ENCODE measurements at regions of chr11 and their contacts with region 1.

Region 1: DNA sequence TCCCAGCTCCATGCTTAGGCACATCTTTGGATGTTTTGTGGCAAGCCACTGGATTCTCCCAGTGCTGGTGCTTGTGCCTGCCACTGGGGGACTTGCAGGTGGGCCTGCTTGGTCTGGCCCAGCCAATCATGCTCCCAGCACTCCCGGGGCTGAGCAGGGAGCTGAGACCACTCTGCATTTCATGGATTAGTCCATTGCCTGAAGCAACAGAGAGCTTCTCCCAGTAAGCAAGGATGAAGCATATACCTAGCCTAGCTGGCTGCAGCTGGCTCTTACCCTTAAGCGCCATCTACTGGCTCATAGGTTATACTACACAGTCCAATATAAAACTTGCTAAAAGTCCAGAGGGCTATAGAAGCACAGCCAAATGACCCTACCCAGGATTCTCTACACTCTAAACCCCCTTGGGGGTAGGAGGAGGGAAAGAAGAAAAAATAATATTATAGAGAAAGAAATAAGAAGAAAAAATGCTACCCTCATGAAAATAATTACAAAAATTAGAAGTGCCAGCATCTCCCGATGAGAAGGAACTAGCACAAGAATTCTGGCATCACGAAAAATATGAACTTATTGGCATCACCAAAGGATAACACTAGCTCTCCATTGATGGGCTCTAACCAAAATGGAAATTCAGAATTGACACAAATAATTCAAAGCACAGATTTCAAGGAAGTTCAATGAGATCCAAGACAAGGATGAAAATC is 275.3 kb downstream of the C11orf87 start:
- DNase-seq: peak; percentile 15
- H3K4me3 ChIP-seq: no peak overlapping the region
- H3K27ac ChIP-seq: no peak overlapping the region
- H3K27me3 ChIP-seq: no peaks in the 10 kb centered on the region
- CTCF ChIP-seq: peak; percentile 75

Region 2: GRCh38 chr11:108664730-108665525 is 1032.4 kb before region 1 on chr11 and contains the start of gene DDX10:
- CTCF ChIA-PET with region 1: interaction called, 12 read pairs
- POLR2A ChIA-PET with region 1: no interaction called
- DNase-seq: peak; percentile 97
- H3K4me3 ChIP-seq: peak within 1 kb of the TSS; percentile 79
- H3K27ac ChIP-seq: peak within 1 kb of the TSS; percentile 34
- H3K27me3 ChIP-seq: no peaks in the 10 kb centered on the region
- CTCF ChIP-seq: peak; percentile 8; the same call in 1 of the 2 replicates
- polyA plus RNA-seq, gene DDX10: 20.3 and 27.1 TPM in 2 replicates

Region 3: DNA sequence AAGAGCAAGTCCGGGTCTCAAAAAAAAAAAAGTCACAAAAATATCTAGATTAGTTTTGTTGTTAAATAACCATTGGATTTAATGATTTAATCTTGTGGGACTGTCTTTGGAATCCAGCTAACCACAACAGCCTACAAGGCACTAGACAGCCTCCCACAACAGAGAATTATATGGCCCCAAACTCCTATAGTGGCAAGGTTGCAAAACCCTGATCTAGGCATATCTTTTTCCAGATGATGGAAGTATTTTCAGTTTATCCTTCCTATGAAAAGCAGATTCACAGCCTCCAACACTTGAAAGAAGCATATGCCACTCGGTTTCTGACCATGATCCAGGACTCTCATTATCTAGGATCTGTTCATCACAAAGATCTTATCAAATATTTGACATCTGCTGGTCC is 280.7 kb before region 1 on chr11:
- CTCF ChIA-PET with region 1: no interaction called
- POLR2A ChIA-PET with region 1: no interaction called
- DNase-seq: no peak
- H3K4me3 ChIP-seq: no peak overlapping the region
- H3K27ac ChIP-seq: no peak overlapping the region
- H3K27me3 ChIP-seq: peaks cover 8% of the 10 kb centered on the region
- CTCF ChIP-seq: no peak

Region 4: GRCh38 chr11:109708184-109708583 is 10.9 kb after region 1 on chr11:
- CTCF ChIA-PET with region 1: interaction called, 13 read pairs
- POLR2A ChIA-PET with region 1: no interaction called
- DNase-seq: no peak
- H3K4me3 ChIP-seq: no peak overlapping the region
- H3K27ac ChIP-seq: no peak overlapping the region
- H3K27me3 ChIP-seq: no peaks in the 10 kb centered on the region
- CTCF ChIP-seq: no peak

Region 5: GRCh38 chr11:109853156-109853776 is 156.0 kb after region 1 on chr11:
- CTCF ChIA-PET with region 1: no interaction called
- POLR2A ChIA-PET with region 1: no interaction called
- DNase-seq: peak; percentile 63
- H3K4me3 ChIP-seq: no peak overlapping the region
- H3K27ac ChIP-seq: no peak overlapping the region
- H3K27me3 ChIP-seq: no peaks in the 10 kb centered on the region
- CTCF ChIP-seq: peak; percentile 83